ENCODE measurements at regions of chr16 and their contacts with region 1.

Region 1: DNA sequence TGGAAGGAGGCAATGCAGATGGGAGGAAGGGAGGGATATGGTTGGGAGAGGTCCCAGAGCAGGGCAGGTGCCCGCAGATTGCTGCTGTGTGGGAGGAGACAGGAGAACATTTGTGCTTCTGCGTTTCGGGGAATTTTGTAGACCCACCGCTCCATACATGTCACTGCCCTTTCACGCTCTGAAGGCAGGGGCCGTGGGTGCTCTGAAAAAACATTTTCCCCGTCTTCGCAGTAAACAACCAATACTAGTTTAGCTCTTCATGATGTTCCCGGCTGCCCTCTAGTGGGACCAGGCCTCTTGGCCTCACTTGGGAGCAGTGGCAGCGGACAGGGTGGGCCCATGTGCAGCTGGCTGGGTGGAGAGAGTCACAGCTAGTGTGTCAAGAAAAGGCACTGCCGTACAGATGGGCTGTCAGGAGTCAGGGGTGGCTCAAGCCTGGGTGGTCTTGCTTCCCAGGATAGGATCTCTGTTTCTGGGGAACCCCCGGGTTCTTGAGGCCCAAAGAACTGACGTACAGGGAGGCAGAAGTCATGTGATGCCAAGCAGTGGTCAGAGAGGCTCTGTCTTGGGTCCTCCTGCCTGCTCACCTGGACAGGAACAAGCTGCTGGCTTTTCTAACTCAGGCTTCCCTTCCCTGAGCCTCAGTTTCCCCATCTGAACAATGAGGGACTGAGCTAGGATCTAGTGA is 46.5 kb upstream of the CPNE2 start:
- DNase-seq: peak in 23 of 35 experiments; percentile 14 to 62 (median 36)
- ATAC-seq: no peak
- H3K4me3 ChIP-seq: no peak overlapping the region
- H3K4me3 Mint-ChIP-seq: no peak overlapping the region
- H3K27ac ChIP-seq: peak overlapping the region; percentile 50
- H3K27ac Mint-ChIP-seq: peak overlapping the region; percentile 83 to 85
- H3K4me1 ChIP-seq: peaks cover 32 to 71% of the 10 kb centered on the region in 2 experiments
- H3K4me1 Mint-ChIP-seq: peaks cover 35 to 50% (median 45%) of the 10 kb centered on the region in 3 donors
- H3K27me3 ChIP-seq: no peaks in the 10 kb centered on the region
- H3K27me3 Mint-ChIP-seq: no peaks in the 10 kb centered on the region

Region 2: DNA sequence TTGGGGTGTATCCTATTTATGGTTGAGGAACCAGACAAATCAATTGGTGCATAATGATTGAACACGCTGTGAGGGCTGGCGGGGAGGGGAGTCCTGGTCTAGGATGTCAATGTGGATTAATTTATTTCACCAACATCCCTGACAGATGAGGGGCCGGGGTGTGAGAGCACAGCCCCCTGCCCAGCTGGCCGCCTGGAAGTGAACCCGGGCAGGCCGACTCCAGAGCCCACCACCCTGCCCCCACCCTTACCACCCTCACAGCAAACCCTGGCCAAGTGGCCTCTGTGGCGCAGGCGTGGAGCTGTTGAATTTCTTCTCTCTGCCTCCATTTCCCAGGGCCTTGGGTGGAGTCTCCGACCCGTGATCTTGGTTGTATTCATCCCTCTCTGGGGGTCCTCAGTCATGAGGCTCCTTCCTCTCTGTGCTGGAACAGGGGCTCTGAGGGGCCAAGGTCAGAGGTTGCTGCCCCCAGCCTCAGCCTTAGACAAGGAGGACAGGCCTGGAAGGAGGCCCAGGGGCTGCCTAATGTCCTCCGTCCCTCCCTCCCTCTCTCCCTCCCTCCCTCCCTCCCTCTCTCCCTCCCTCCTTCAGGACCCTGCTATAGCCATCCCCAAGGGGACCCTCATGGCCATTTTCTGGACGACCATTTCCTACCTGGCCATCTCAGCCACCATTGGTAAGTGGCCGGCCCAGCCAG is 168.2 kb before region 1 on chr16:
- CTCF ChIA-PET with region 1: no interaction called
- POLR2A ChIA-PET with region 1: no interaction called
- DNase-seq: no peak
- ATAC-seq: no peak
- H3K4me3 ChIP-seq: no peak overlapping the region
- H3K4me3 Mint-ChIP-seq: no peak overlapping the region
- H3K27ac ChIP-seq: no peak overlapping the region
- H3K27ac Mint-ChIP-seq: no peak overlapping the region
- H3K4me1 ChIP-seq: no peaks in the 10 kb centered on the region
- H3K4me1 Mint-ChIP-seq: no peaks in the 10 kb centered on the region
- H3K27me3 ChIP-seq: peaks cover 0 to 3% of the 10 kb centered on the region in 2 experiments
- H3K27me3 Mint-ChIP-seq: no peaks in the 10 kb centered on the region

Region 3: DNA sequence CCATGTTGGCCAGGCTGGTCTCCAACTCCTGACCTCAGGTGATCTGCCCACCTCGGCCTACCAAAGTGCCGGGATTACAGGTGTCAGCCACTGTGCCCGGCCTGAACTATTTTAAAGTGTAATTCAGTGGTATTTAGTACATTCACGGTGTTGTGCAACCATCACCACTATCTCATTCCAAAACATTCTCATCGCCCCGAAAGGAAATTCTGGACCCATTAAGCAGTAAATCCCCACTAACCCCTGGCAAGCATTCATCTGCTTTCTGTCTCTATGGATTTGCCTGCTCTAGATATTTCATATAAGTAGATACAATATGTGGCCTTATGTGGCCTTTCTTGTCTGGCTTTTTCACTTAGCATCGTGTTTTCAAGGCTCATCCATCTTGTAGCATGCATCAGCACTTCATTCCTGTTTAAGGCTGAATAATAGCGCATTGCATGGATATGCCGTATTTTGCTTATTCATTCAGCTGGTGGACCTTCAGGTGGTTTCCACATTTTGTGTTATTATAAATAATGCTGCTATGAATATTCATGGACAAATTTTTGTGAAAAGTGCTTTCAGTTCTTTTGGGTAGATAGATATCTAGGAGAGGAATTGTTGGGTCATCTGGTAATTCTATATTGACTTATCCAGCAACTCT is 122.3 kb before region 1 on chr16:
- CTCF ChIA-PET with region 1: no interaction called
- POLR2A ChIA-PET with region 1: interaction called in 1 of 2 experiments, 13 read pairs
- DNase-seq: no peak
- ATAC-seq: no peak
- H3K4me3 ChIP-seq: no peak overlapping the region
- H3K4me3 Mint-ChIP-seq: no peak overlapping the region
- H3K27ac ChIP-seq: no peak overlapping the region
- H3K27ac Mint-ChIP-seq: no peak overlapping the region
- H3K4me1 ChIP-seq: peaks cover 0 to 5% of the 10 kb centered on the region in 2 experiments
- H3K4me1 Mint-ChIP-seq: peaks cover 0 to 14% (median 5%) of the 10 kb centered on the region in 3 donors
- H3K27me3 ChIP-seq: no peaks in the 10 kb centered on the region
- H3K27me3 Mint-ChIP-seq: no peaks in the 10 kb centered on the region

Region 4: GRCh38 chr16:56964243-56965148 is 81.3 kb before region 1 on chr16:
- CTCF ChIA-PET with region 1: interaction called in 1 of 2 experiments, 12 read pairs
- POLR2A ChIA-PET with region 1: interaction called in 1 of 2 experiments, 3 read pairs
- DNase-seq: peak; percentile 84 to 98 (median 94)
- ATAC-seq: peak; percentile 86 to 97 (median 92)
- H3K4me3 ChIP-seq: peak overlapping the region in 1 of 2 donors; percentile 26
- H3K4me3 Mint-ChIP-seq: no peak overlapping the region
- H3K27ac ChIP-seq: peak overlapping the region; percentile 11
- H3K27ac Mint-ChIP-seq: peak overlapping the region; percentile 57 to 68
- H3K4me1 ChIP-seq: peaks cover 9 to 17% of the 10 kb centered on the region in 2 experiments
- H3K4me1 Mint-ChIP-seq: peaks cover 21 to 22% (median 22%) of the 10 kb centered on the region in 3 donors
- H3K27me3 ChIP-seq: peaks cover 0 to under 1% of the 10 kb centered on the region in 2 experiments
- H3K27me3 Mint-ChIP-seq: no peaks in the 10 kb centered on the region

Region 5: DNA sequence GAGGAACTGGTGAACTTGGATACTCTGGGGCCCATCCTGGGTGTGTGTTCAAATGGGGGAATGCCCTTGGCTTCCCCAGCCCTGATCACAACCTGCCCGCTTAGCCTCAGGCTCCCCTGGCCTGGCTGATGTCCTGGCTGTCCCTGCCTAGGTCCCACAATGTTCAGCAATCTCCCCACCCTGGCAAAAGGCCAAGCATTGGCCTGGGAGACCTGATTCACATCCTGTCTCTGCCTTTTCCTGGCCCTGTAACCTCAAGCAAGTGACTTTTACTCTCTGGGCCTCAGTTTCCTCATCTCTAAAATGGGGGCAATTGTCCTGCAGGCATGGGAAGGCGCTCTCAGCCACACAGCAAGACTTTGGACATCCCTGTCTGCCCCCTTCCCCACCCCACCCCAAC is 60.9 kb after region 1 on chr16:
- CTCF ChIA-PET with region 1: no interaction called
- POLR2A ChIA-PET with region 1: no interaction called
- DNase-seq: no peak
- ATAC-seq: no peak
- H3K4me3 ChIP-seq: no peak overlapping the region
- H3K4me3 Mint-ChIP-seq: no peak overlapping the region
- H3K27ac ChIP-seq: no peak overlapping the region
- H3K27ac Mint-ChIP-seq: no peak overlapping the region
- H3K4me1 ChIP-seq: peaks cover 0 to 20% of the 10 kb centered on the region in 2 experiments
- H3K4me1 Mint-ChIP-seq: peaks cover 12 to 17% (median 17%) of the 10 kb centered on the region in 3 donors
- H3K27me3 ChIP-seq: no peaks in the 10 kb centered on the region
- H3K27me3 Mint-ChIP-seq: no peaks in the 10 kb centered on the region

Region 6: DNA sequence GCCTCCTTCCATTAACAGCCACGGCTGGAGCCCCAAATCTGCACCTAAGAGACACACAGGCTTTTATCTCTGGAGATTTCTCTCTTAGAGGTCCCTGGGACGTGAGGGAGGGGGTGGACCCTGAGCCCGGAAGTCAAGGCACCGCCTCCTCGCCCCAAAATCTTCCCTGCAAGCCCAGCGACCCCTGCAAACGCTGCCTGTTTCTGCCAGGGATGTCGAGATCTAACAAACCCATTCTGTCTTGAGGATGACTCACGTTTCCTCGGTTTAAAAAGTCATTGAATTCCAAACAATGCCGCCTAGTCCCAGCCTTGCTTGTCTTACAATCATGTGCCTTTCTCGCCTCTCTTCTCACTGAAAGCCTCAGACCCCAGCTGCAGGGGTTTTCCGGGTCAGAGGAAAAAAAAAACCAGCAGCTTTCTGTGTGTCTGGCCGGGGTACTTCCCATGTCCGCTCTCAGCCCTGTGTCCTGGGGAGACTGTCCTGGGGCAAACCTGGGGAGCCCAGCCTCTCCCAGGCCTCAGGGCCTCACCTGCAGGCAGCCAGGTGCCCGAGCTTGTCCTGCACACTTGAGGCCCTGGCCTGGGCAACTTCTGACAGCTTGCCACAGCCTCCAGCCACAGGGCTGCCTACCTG is 214.6 kb after region 1 on chr16:
- CTCF ChIA-PET with region 1: no interaction called
- POLR2A ChIA-PET with region 1: no interaction called
- DNase-seq: peak in 10 of 35 experiments; percentile 12 to 55 (median 38)
- ATAC-seq: peak; percentile 39 to 78 (median 69)
- H3K4me3 ChIP-seq: no peak overlapping the region
- H3K4me3 Mint-ChIP-seq: peak overlapping the region; percentile 6 to 65 (median 13)
- H3K27ac ChIP-seq: no peak overlapping the region
- H3K27ac Mint-ChIP-seq: peak overlapping the region; percentile 88 to 89
- H3K4me1 ChIP-seq: peaks cover 6 to 34% of the 10 kb centered on the region in 2 experiments
- H3K4me1 Mint-ChIP-seq: peaks cover 14 to 31% (median 23%) of the 10 kb centered on the region in 3 donors
- H3K27me3 ChIP-seq: no peaks in the 10 kb centered on the region
- H3K27me3 Mint-ChIP-seq: no peaks in the 10 kb centered on the region